ENCODE measurements at regions of chr5 and their contacts with region 1.

Region 1: GRCh38 chr5:44727100-44727499 is 81.6 kb upstream of the MRPS30 start:
- DNase-seq: no peak
- H3K4me3 ChIP-seq: no peak overlapping the region
- H3K27ac ChIP-seq: no peak overlapping the region
- H3K4me1 ChIP-seq: no peaks in the 10 kb centered on the region
- H3K27me3 ChIP-seq: no peaks in the 10 kb centered on the region
- CTCF ChIP-seq: no peak

Region 2: DNA sequence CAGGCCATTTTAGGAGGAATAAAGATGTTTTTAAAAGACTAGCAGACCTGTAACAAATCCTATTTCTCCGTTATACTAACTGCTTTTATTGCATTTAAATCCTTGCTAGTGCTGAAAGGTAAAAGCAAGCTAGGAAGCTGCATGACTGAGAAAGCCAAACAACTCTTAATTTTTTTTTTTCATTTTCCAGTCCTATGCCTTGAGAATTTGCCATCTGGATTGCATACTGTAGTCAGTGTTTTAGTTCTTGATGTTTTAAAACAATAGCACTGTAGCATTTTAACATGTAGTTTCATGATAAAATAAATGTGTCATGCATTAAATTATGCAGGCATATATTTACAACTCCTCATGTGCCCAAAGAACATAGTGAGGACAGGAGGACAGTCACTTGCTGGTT is 229.5 kb before region 1 on chr5:
- CTCF ChIA-PET with region 1: no interaction called
- dilution Hi-C with region 1: no loop called
- in situ Hi-C with region 1: no loop called
- intact Hi-C with region 1: no loop called
- DNase-seq: no peak
- H3K4me3 ChIP-seq: no peak overlapping the region
- H3K27ac ChIP-seq: no peak overlapping the region
- H3K4me1 ChIP-seq: no peaks in the 10 kb centered on the region
- H3K27me3 ChIP-seq: no peaks in the 10 kb centered on the region
- CTCF ChIP-seq: no peak

Region 3: DNA sequence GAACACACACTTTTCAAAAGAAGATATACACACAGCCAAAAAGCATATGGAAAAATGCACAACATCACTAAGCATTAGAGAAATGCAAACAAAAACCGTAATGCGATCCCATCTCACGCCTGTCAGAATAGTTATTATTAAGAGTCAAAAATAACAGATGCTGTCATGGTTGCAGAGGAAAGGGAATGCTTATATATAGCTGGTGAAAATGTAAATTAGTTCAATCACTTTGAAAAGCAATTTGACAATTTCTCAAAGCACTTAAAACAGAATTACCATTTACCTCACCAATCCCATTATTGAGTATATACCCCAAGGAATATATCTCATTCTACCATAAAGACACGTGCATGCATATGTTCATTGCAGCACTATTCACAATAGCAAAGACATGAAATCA is 45.2 kb before region 1 on chr5:
- CTCF ChIA-PET with region 1: no interaction called
- dilution Hi-C with region 1: no loop called
- in situ Hi-C with region 1: no loop called
- intact Hi-C with region 1: loop called (anchors 1 kb)
- DNase-seq: no peak
- H3K4me3 ChIP-seq: no peak overlapping the region
- H3K27ac ChIP-seq: no peak overlapping the region
- H3K4me1 ChIP-seq: no peaks in the 10 kb centered on the region
- H3K27me3 ChIP-seq: no peaks in the 10 kb centered on the region
- CTCF ChIP-seq: no peak

Region 4: DNA sequence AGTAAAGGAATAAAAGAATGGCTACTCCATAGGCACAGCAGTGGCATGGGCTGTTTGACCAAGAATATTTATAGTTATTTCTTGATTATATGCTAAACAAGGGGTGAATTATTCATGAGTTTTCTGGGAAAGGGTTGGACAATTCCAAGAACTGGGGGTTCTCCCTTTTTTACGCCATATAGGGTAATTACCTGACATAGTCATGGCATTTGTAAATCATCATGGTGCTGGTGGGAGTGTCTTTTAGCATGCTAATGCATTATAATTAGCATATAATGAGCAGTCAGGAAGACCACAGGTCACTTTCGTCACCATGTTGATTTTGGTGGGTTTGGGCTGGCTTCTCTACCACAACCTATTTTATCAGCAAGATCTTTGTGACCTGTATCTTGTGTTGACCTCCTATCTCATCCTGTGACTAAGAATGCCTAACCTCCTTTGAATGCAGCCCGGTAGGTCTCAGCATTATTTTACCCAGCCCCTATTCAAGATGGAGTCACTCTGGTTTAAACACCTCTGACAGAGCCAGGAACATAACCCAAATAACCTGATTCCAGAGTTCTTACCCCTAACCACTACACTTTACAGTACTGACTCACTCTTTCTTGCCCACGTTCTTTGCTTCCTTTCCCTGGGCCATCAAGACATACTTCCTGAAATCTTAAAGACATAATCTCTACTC is 56.7 kb after region 1 on chr5:
- CTCF ChIA-PET with region 1: no interaction called
- dilution Hi-C with region 1: no loop called
- in situ Hi-C with region 1: no loop called
- intact Hi-C with region 1: no loop called
- DNase-seq: no peak
- H3K4me3 ChIP-seq: no peak overlapping the region
- H3K27ac ChIP-seq: no peak overlapping the region
- H3K4me1 ChIP-seq: no peaks in the 10 kb centered on the region
- H3K27me3 ChIP-seq: no peaks in the 10 kb centered on the region
- CTCF ChIP-seq: no peak